ENCODE measurements at regions of chr10 and their contacts with region 1.

Region 1: DNA sequence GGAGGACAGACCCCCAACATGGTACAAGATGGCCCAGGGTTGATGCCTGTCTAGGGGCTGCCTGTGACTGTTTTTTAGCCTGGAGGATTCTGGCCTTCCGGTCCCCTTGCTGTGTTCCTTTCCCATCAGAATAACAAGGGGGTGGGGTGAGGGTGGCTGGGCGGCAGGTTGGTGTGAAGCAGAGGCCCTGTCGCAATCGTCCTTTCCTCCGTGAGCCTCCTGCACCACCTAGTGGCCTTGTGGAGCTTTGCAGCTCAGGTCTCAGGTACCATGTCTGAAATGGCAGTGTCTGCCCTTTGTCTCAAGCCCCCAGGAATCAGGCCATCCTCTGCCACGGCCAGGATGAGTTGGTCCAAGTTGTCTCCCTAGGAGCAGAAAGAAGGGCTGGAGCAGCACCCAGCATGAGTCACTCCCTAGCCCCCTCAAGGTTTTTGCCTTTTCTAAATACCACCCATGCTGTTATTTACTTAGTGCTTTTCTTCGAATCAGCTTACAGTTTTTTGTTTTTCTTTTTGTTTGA is 24.2 kb downstream of the TACR2 start:
- DNase-seq: peak; percentile 72 to 90 (median 84)
- H3K4me3 ChIP-seq: no peak overlapping the region
- H3K27ac ChIP-seq: peak overlapping the region in 14 of 59 donors; percentile 13 to 59 (median 28)
- H3K27me3 ChIP-seq: peaks cover 0 to 3% (median 0%) of the 10 kb centered on the region in 45 donors
- CTCF ChIP-seq: peak; percentile 77 to 98 (median 94)

Region 2: GRCh38 chr10:69004821-69005220 is 387.7 kb before region 1 on chr10:
- intact Hi-C with region 1: loop called in 1 of 2 experiments (anchors 10 kb)
- DNase-seq: no peak
- H3K4me3 ChIP-seq: no peak overlapping the region
- H3K27ac ChIP-seq: peak overlapping the region in 1 of 59 donors; percentile 27
- H3K27me3 ChIP-seq: no peaks in the 10 kb centered on the region
- CTCF ChIP-seq: peak in 53 of 56 donors; percentile 11 to 73 (median 47)